ENCODE measurements at regions of chr10 and their contacts with region 1.

Region 1: GRCh38 chr10:37976091-37976879 is at the start of gene ZNF25:
- DNase-seq: peak; percentile 98
- ATAC-seq: peak; percentile 97
- H3K4me3 ChIP-seq: peak within 1 kb of the TSS; percentile 77
- H3K27ac ChIP-seq: peak within 1 kb of the TSS; percentile 62
- H3K4me1 ChIP-seq: no peaks in the 10 kb centered on the region
- H3K27me3 ChIP-seq: no peaks in the 10 kb centered on the region
- CTCF ChIP-seq: peak; percentile 99
- POLR2A ChIP-seq: peak; percentile 76
- RAD21 ChIP-seq: peak; percentile 77
- total RNA-seq, gene ZNF25: 9.5 and 12.2 TPM in 2 replicates

Region 2: DNA sequence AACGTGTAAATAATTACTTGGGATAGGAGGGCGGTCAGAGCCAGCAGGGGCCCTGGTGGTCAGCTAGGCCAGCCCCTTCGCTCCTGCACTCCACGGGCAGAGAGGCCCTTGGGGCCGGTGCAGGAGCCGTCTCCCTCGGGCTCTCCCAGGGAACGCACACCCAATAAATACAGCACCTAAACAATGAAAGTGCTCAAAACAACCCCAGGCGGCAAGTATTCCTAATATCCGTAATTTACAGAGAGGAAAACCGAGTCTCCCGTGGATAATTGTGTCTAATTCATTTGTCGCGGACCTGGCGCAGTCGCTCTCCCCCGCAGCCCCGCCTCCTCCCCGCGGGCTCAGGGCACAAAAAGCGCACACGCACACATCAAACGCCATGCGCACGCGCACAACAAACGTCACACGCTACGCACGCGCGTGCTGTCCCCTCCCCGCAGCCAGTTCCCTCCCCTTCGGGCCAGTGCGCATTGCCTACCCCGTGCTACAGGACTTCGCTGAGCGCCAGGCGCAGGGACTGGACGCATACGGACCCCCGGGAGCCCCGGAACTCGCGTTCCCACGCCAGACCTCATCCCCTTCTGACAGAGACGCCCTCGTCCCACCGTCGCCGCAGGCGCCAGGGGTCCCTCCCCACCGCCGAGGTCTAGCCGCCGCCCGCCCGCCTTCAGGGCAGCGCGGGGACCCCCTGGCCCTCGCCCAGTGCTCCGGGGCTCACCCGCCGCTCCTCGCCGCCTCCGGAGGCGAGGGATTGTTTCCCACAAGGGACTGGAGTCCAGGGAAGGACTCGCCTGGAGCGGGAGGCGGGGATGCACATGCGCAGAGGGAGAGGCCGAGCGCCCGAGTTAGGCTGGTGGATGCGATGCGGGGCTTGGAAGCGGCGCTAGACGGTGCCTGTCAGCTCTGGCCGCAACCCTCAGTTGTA is 118.7 kb before region 1 on chr10 and contains the start of gene ZNF248:
- CTCF ChIA-PET with region 1: no interaction called
- POLR2A ChIA-PET with region 1: no interaction called
- dilution Hi-C with region 1: no loop called
- in situ Hi-C with region 1: no loop called
- intact Hi-C with region 1: loop called (anchors 2 kb)
- DNase-seq: peak; percentile 96
- ATAC-seq: peak; percentile 94
- H3K4me3 ChIP-seq: peak within 1 kb of the TSS; percentile 63
- H3K27ac ChIP-seq: peak within 1 kb of the TSS; percentile 85
- H3K4me1 ChIP-seq: peaks cover 2% of the 10 kb centered on the region; the same call in 1 of the 2 replicates
- H3K27me3 ChIP-seq: no peaks in the 10 kb centered on the region
- CTCF ChIP-seq: no peak
- POLR2A ChIP-seq: peak; percentile 97
- RAD21 ChIP-seq: no peak
- total RNA-seq, gene ZNF248: 5.7 and 6.7 TPM in 2 replicates

Region 3: DNA sequence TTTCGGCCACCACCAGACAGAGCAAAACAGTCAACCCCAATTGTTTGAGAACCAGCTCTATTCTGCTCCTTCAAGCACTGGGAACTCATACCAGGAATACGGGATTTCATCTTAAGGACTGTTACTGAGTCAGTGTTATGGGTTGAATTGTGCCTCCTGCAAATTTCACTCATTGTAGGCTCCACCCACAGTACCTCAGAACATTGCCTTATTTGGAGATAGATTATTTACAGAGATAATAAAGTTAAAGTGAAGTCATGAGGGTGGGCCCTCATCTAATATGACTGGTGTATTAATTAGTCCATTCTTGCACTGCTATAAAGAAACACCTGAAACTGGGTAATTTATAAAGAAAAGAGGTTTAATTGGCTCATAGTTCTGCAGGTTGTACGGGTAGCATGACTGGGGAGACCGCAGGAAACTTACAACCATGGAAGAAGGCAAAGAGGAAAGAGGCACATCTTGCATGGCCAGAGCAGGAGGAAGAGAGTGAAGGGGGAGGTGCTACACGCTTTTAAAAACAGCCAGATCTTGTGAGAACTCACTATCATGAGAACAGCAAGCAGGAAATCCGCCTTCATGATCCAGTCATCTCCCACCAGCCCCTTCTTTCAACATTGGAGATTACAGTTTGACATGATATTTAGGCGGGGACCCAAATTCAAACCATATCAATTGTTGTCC is 104.6 kb before region 1 on chr10:
- CTCF ChIA-PET with region 1: no interaction called
- POLR2A ChIA-PET with region 1: no interaction called
- dilution Hi-C with region 1: no loop called
- in situ Hi-C with region 1: no loop called
- intact Hi-C with region 1: no loop called
- DNase-seq: no peak
- ATAC-seq: no peak
- H3K4me3 ChIP-seq: no peak overlapping the region
- H3K27ac ChIP-seq: no peak overlapping the region
- H3K4me1 ChIP-seq: no peaks in the 10 kb centered on the region
- H3K27me3 ChIP-seq: no peaks in the 10 kb centered on the region
- CTCF ChIP-seq: no peak
- POLR2A ChIP-seq: no peak
- RAD21 ChIP-seq: no peak

Region 4: DNA sequence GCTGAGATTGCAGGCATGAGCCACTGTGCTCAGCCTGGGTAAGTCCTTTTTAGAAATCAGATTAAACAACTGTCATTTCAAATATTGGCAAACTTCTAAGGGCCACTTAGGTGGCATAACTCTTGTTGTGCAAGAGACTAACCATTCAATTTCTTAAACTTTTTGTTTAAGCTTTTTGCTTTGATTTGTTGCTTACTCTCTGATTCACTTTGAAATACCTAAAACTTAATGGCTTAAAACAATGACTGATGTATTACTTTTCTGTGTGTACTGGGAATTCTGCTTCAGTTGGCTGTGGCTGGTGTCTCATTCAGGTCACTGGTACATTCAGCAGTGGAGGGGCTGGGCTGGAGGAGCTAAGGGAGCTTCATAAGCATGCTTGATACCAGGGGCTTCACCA is 28.8 kb before region 1 on chr10:
- CTCF ChIA-PET with region 1: no interaction called
- POLR2A ChIA-PET with region 1: no interaction called
- dilution Hi-C with region 1: no loop called
- in situ Hi-C with region 1: no loop called
- intact Hi-C with region 1: no loop called
- DNase-seq: no peak
- ATAC-seq: no peak
- H3K4me3 ChIP-seq: no peak overlapping the region
- H3K27ac ChIP-seq: no peak overlapping the region
- H3K4me1 ChIP-seq: no peaks in the 10 kb centered on the region
- H3K27me3 ChIP-seq: no peaks in the 10 kb centered on the region
- CTCF ChIP-seq: no peak
- POLR2A ChIP-seq: no peak
- RAD21 ChIP-seq: no peak

Region 5: GRCh38 chr10:38094158-38094920 is 118.1 kb after region 1 on chr10 and contains the start of gene ZNF37A:
- CTCF ChIA-PET with region 1: interaction called, 4 read pairs
- POLR2A ChIA-PET with region 1: no interaction called
- dilution Hi-C with region 1: no loop called
- in situ Hi-C with region 1: no loop called
- intact Hi-C with region 1: loop called (anchors 2 kb)
- DNase-seq: peak; percentile 97
- ATAC-seq: peak; percentile 98
- H3K4me3 ChIP-seq: peak within 1 kb of the TSS; percentile 71
- H3K27ac ChIP-seq: peak within 1 kb of the TSS; percentile 83
- H3K4me1 ChIP-seq: no peaks in the 10 kb centered on the region; the same call in 1 of the 2 replicates
- H3K27me3 ChIP-seq: no peaks in the 10 kb centered on the region
- CTCF ChIP-seq: no peak
- POLR2A ChIP-seq: 0 out of 2 replicates have a peak, but pooled peaks have one; percentile 49
- RAD21 ChIP-seq: no peak
- total RNA-seq, gene ZNF37A: 8.6 and 10.0 TPM in 2 replicates

Measured in IMR-90 (cell line).